Tibial artery (tissue), 4 donors: ENCODE measurements at regions of chr19 and their contacts with region 1.

Region 1: DNA sequence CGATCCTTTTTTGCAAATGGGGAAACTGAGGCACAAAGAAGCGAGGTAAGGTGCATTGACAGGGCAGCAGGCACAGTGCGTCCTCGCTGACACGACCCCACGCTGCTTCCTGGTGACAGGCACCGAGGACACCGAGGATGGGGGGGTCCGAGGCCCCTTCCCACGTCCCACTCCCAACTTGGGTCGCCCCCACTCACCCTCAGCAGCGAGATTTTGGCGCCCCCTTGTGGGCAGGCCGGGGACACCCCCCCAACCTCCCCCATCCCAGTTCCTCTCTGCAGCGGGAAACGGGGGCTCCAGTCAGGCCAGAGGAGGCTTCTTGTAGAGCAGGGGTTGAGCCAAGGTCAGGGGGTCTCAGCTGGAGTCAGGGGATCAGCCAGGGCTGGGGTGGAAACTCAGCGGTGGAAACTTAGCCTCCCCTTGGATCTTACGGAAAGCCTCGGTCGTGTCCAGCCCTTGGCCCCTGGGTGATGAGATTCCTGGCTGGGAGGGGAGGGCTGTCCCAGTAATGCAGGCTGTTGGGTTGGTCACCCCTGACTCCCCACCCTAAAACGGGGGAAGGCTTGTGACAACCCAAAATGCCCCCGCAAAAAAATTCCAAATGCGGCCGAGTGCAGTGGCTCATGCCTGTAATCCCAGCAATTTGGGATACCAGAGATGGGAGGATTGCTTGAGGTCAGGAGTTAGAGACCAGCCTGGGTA is 8.2 kb downstream of the SMIM24 start:
- DNase-seq: no peak
- H3K4me3 ChIP-seq: peak overlapping the region in 1 of 2 donors; percentile 13
- H3K27ac ChIP-seq: peak overlapping the region in 1 of 2 donors; percentile 4
- H3K4me1 ChIP-seq: peaks cover 5 to 51% (median 40%) of the 10 kb centered on the region in 4 donors
- H3K27me3 ChIP-seq: peaks cover 0 to 12% of the 10 kb centered on the region in 2 donors
- CTCF ChIP-seq: peak; percentile 89 to 91

Region 2: DNA sequence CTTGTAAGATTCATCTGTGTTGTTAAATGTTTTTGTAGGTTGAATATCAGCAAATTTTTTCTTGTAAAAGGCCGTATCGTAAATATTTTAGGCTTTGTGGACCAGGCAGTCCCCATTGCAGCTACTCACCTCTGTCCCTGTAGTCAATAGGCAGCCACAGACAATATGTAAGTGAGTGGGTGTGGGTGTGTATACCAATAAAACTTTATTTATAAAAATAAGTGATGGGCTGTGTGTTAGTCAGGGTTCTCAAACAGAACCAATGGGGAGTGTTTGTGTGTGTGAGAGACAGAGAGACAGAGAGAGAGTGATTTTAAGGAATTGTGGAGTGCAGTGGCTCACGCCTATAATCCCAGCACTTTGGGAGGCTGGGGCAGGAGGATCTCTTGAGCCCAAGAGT is 143.4 kb before region 1 on chr19:
- intact Hi-C with region 1: loop called (anchors 2 kb)
- DNase-seq: no peak
- H3K4me3 ChIP-seq: no peak overlapping the region
- H3K27ac ChIP-seq: no peak overlapping the region
- H3K4me1 ChIP-seq: peaks cover 0 to 10% (median 5%) of the 10 kb centered on the region in 4 donors
- H3K27me3 ChIP-seq: no peaks in the 10 kb centered on the region
- CTCF ChIP-seq: no peak

Region 3: DNA sequence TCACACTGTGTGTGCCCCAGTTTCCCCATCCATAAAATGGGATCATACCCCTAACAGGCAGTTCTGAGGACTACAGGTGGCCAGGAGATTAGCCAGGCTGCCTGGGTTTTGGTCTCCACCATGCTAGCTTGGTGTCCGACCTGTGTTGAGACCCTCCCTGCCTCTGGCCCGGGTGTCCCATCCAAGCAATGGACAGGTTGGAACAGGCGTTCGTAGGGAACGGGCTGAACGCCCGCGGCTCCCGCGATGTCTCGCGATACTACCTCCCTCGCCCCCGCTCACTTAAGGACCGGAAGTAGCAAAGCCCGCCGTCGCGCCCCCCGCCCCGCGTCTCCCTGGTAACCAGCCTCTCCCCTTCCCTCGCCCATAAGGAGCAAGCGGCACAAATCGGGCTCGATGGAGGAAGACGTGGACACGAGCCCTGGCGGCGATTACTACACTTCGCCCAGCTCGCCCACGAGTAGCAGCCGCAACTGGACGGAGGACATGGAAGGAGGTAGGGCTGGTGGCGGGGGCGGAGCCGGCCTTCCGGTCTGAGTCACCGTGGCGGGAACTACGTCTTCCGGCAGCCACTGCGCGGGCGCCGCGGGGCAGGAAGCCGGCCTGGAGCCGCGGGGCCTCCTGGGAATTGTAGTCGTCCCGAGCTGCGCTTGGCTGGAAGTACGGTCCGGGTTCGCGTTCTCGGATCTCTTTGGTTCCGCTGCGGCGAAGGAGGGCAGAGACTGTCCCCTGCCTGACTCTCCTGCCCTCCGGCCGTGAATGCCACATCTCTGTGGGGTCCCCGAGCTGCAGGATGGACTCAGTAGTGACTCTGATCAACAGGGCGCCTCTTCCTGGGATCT is 37.2 kb before region 1 on chr19:
- intact Hi-C with region 1: loop called (anchors 5 kb)
- DNase-seq: peak; percentile 95 to 98
- H3K4me3 ChIP-seq: peak overlapping the region; percentile 47 to 48
- H3K27ac ChIP-seq: peak overlapping the region; percentile 88 to 93
- H3K4me1 ChIP-seq: peaks cover 8 to 60% (median 48%) of the 10 kb centered on the region in 4 donors
- H3K27me3 ChIP-seq: no peaks in the 10 kb centered on the region
- CTCF ChIP-seq: peak in 1 of 2 experiments; percentile 13

Region 4: DNA sequence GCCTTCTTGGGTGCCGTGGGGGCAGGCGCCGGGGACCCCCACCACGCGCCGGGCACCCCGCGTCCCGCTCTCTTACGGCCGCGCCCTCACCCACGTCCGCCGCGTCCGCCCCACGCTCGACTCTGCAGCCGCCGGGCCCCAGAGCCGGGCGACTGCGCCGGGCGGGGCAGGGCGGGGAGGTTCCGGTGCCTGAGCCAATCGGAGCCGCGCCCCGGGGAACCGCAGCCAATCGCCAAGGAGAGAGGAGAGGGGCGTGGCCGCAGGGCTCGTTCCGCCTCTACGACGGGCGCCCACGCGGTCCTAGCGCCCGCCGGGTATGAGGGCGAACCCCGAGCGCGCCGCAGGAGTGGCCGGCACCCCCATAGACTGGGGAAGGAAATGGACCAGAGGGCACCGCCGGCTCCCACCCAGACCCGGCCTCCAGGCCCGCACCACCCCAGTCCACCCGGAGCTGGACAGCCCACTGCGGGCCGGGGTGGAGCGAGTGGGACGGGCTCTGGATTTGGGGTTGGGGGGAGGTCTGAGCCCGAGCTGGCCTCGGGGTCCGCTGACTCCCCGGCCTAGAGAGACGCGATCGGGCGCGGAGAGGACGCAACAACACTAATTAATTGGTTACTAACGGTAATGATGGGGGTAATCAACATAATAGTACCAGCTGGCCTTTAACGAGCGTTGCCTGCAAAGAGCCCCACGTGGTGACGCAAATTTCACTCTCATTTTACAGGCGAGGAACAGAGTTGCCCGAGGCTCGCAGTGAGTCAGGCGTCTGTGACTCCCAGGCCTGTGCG is 85.5 kb after region 1 on chr19 and contains the start of gene MFSD12:
- intact Hi-C with region 1: no loop called
- DNase-seq: peak; percentile 92 to 97
- H3K4me3 ChIP-seq: peak within 1 kb of the TSS; percentile 74 to 95
- H3K27ac ChIP-seq: peak within 1 kb of the TSS; percentile 79 to 82
- H3K4me1 ChIP-seq: peaks cover 0 to 22% (median 19%) of the 10 kb centered on the region in 4 donors
- H3K27me3 ChIP-seq: no peaks in the 10 kb centered on the region
- CTCF ChIP-seq: no peak

Region 5: DNA sequence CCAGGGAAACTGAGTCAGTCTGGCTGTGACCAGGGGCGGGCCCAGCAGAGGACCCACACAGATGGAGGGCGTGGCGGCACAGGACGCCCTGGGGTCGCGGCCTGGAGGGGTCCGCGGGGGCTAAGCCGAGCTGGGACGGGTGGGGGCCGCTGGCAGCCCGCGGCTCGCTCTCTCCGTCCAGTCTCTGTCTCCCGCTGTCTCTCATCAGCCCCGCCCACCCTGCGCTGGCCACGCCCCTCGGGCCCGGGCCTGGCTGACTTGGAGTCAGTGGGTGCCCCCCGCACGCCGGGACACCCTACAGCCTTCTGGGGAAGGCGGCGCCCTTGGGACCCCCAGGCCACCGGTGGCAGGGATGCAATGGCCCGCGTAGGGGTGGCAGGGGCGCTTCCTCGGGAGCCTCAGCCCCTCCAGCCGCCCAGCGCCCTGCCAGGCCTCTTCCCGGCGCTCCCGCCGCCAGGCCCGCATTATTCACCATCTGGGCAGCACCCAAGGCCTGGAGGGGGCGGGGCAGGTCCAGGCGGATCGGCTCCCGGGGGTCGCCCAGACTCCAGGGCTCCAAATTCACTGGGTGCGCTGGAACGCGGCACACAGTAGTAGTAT is 134.7 kb after region 1 on chr19 and contains the start of gene TBXA2R:
- intact Hi-C with region 1: loop called (anchors 10 kb)
- DNase-seq: peak; percentile 88 to 93
- H3K4me3 ChIP-seq: peak within 1 kb of the TSS; percentile 84 to 88
- H3K27ac ChIP-seq: peak within 1 kb of the TSS; percentile 96 to 97
- H3K4me1 ChIP-seq: peaks cover 0 to 83% (median 65%) of the 10 kb centered on the region in 4 donors
- H3K27me3 ChIP-seq: no peaks in the 10 kb centered on the region
- CTCF ChIP-seq: no peak